Panc1 (cell line): ENCODE measurements at regions of chr15 and their contacts with region 1.

Region 1: GRCh38 chr15:45588219-45588875 is 1.2 kb downstream of the BLOC1S6 start:
- DNase-seq: no peak
- ATAC-seq: no peak
- H3K4me3 ChIP-seq: peak overlapping the region; percentile 92 to 100
- H3K27ac ChIP-seq: peak overlapping the region; percentile 98
- H3K4me1 ChIP-seq: peaks cover 26% of the 10 kb centered on the region
- H3K27me3 ChIP-seq: no peaks in the 10 kb centered on the region
- CTCF ChIP-seq: no peak

Region 2: DNA sequence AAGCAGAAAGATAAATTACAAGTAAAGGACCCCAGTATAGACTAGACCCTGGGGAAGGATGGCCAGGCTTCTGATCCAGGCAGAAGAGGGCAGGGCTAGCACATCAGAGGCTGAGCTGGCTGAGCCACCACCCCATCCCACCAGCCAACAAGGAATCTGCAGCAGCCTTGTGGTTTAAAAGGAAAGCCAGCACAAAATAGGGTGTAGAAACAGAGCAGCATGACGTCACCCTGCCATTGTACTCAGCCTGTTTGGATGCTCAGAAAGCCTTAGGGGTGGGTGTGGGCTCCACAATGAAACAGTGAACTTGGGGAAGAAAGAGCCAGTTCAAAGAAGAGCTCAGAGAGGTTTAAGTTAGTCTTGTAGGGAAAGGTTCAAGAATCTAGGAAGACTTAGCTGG is 430.4 kb before region 1 on chr15:
- CTCF ChIA-PET with region 1: no interaction called
- POLR2A ChIA-PET with region 1: no interaction called
- in situ Hi-C with region 1: no loop called
- intact Hi-C with region 1: no loop called
- DNase-seq: no peak
- ATAC-seq: no peak
- H3K4me3 ChIP-seq: no peak overlapping the region
- H3K27ac ChIP-seq: no peak overlapping the region
- H3K4me1 ChIP-seq: peaks cover 4% of the 10 kb centered on the region
- H3K27me3 ChIP-seq: no peaks in the 10 kb centered on the region
- CTCF ChIP-seq: no peak

Region 3: DNA sequence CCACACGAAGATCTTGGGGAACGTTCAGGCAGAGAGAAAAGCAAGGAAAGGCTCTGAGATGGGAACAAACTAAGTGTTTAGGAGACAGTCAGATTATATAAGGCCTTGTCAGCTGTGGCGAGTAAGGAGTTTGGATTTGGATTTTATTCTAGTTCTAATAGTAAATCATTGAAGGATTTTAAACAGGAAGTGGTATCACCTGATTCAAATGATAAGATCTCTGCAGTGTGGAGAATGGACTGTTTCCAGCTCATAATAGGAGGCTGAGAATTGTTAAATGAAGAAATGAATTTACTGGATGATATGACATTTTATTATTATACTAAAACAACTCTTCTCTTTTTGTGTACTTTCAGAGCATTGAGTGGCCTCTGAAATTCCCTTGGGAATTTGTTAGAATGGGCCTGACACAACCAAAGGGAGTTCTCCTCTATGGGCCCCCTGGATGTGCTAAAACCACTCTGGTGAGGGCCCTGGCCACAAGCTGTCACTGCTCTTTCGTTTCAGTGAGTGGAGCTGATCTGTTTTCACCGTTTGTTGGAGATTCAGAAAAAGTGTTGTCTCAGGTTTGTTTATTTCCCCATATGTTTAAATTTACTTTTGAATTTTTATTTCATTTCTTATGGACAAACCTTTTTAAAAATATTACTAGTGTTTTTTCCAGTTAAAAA is 174.0 kb before region 1 on chr15:
- CTCF ChIA-PET with region 1: interaction called, 17 read pairs
- POLR2A ChIA-PET with region 1: no interaction called
- in situ Hi-C with region 1: no loop called
- intact Hi-C with region 1: no loop called
- DNase-seq: no peak
- ATAC-seq: no peak
- H3K4me3 ChIP-seq: no peak overlapping the region
- H3K27ac ChIP-seq: no peak overlapping the region
- H3K4me1 ChIP-seq: no peaks in the 10 kb centered on the region
- H3K27me3 ChIP-seq: no peaks in the 10 kb centered on the region
- CTCF ChIP-seq: no peak

Region 4: GRCh38 chr15:45439521-45440260 is 148.7 kb before region 1 on chr15:
- CTCF ChIA-PET with region 1: no interaction called
- POLR2A ChIA-PET with region 1: no interaction called
- in situ Hi-C with region 1: no loop called
- intact Hi-C with region 1: no loop called
- DNase-seq: no peak
- ATAC-seq: no peak
- H3K4me3 ChIP-seq: no peak overlapping the region
- H3K27ac ChIP-seq: 0 out of 2 replicates have a peak overlapping the region, but pooled peaks have one; percentile 7
- H3K4me1 ChIP-seq: peaks cover 13% of the 10 kb centered on the region
- H3K27me3 ChIP-seq: no peaks in the 10 kb centered on the region
- CTCF ChIP-seq: no peak

Region 5: GRCh38 chr15:45529613-45530012 is 58.7 kb before region 1 on chr15:
- CTCF ChIA-PET with region 1: no interaction called
- POLR2A ChIA-PET with region 1: interaction called, 8 read pairs
- in situ Hi-C with region 1: no loop called
- intact Hi-C with region 1: loop called (anchors 5 kb)
- DNase-seq: no peak
- ATAC-seq: no peak
- H3K4me3 ChIP-seq: no peak overlapping the region
- H3K27ac ChIP-seq: no peak overlapping the region
- H3K4me1 ChIP-seq: no peaks in the 10 kb centered on the region
- H3K27me3 ChIP-seq: no peaks in the 10 kb centered on the region
- CTCF ChIP-seq: no peak